ENCODE measurements at regions of chr2 and their contacts with region 1.

Region 1: GRCh38 chr2:205925373-205926337 is 160.3 kb downstream of the INO80D start:
- DNase-seq: peak; percentile 73
- H3K4me3 Mint-ChIP-seq: peak overlapping the region; percentile 38
- H3K27ac Mint-ChIP-seq: no peak overlapping the region
- H3K4me1 Mint-ChIP-seq: no peaks in the 10 kb centered on the region
- H3K27me3 Mint-ChIP-seq: peaks cover 44% of the 10 kb centered on the region
- CTCF ChIP-seq: peak; percentile 93

Region 2: GRCh38 chr2:204145263-204145751 is 1780.3 kb before region 1 on chr2:
- CTCF ChIA-PET with region 1: interaction called, 4 read pairs
- POLR2A ChIA-PET with region 1: no interaction called
- intact Hi-C with region 1: loop called (anchors 1 kb)
- DNase-seq: peak; percentile 81
- H3K4me3 Mint-ChIP-seq: peak overlapping the region; percentile 69
- H3K27ac Mint-ChIP-seq: no peak overlapping the region
- H3K4me1 Mint-ChIP-seq: peaks cover 5% of the 10 kb centered on the region
- H3K27me3 Mint-ChIP-seq: peaks cover 57% of the 10 kb centered on the region
- CTCF ChIP-seq: peak; percentile 90

Region 3: GRCh38 chr2:204871231-204871953 is 1054.3 kb before region 1 on chr2:
- CTCF ChIA-PET with region 1: interaction called, 20 read pairs
- POLR2A ChIA-PET with region 1: no interaction called
- intact Hi-C with region 1: loop called (anchors 5 kb)
- DNase-seq: peak; percentile 47
- H3K4me3 Mint-ChIP-seq: no peak overlapping the region
- H3K27ac Mint-ChIP-seq: peak overlapping the region; percentile 7
- H3K4me1 Mint-ChIP-seq: peaks cover 17% of the 10 kb centered on the region
- H3K27me3 Mint-ChIP-seq: no peaks in the 10 kb centered on the region
- CTCF ChIP-seq: peak; percentile 30

Region 4: GRCh38 chr2:205766779-205767359 is 158.8 kb before region 1 on chr2:
- CTCF ChIA-PET with region 1: interaction called, 15 read pairs
- POLR2A ChIA-PET with region 1: no interaction called
- intact Hi-C with region 1: loop called (anchors 1 kb)
- DNase-seq: peak; percentile 70
- H3K4me3 Mint-ChIP-seq: no peak overlapping the region
- H3K27ac Mint-ChIP-seq: no peak overlapping the region
- H3K4me1 Mint-ChIP-seq: peaks cover 19% of the 10 kb centered on the region
- H3K27me3 Mint-ChIP-seq: no peaks in the 10 kb centered on the region
- CTCF ChIP-seq: peak; percentile 79

Region 5: GRCh38 chr2:205797866-205798265 is 127.8 kb before region 1 on chr2:
- CTCF ChIA-PET with region 1: no interaction called
- POLR2A ChIA-PET with region 1: no interaction called
- intact Hi-C with region 1: no loop called
- DNase-seq: no peak
- H3K4me3 Mint-ChIP-seq: no peak overlapping the region
- H3K27ac Mint-ChIP-seq: no peak overlapping the region
- H3K4me1 Mint-ChIP-seq: no peaks in the 10 kb centered on the region
- H3K27me3 Mint-ChIP-seq: no peaks in the 10 kb centered on the region
- CTCF ChIP-seq: no peak

Region 6: GRCh38 chr2:205827809-205828365 is 97.8 kb before region 1 on chr2:
- CTCF ChIA-PET with region 1: no interaction called
- POLR2A ChIA-PET with region 1: no interaction called
- intact Hi-C with region 1: no loop called
- DNase-seq: no peak
- H3K4me3 Mint-ChIP-seq: no peak overlapping the region
- H3K27ac Mint-ChIP-seq: no peak overlapping the region
- H3K4me1 Mint-ChIP-seq: no peaks in the 10 kb centered on the region
- H3K27me3 Mint-ChIP-seq: no peaks in the 10 kb centered on the region
- CTCF ChIP-seq: no peak

Region 7: GRCh38 chr2:205915130-205915524 is 10.5 kb before region 1 on chr2:
- CTCF ChIA-PET with region 1: interaction called, 24 read pairs
- POLR2A ChIA-PET with region 1: interaction called, 3 read pairs
- intact Hi-C with region 1: no loop called
- DNase-seq: no peak
- H3K4me3 Mint-ChIP-seq: no peak overlapping the region
- H3K27ac Mint-ChIP-seq: no peak overlapping the region
- H3K4me1 Mint-ChIP-seq: no peaks in the 10 kb centered on the region
- H3K27me3 Mint-ChIP-seq: peaks cover 4% of the 10 kb centered on the region
- CTCF ChIP-seq: no peak

Measured in MCF 10A (cell line).